Prostate gland (tissue), 2 donors: ENCODE measurements at regions of chr4 and their contacts with region 1.

Region 1: GRCh38 chr4:7067452-7068278 is at the start of gene GRPEL1:
- DNase-seq: peak; percentile 99
- H3K4me3 ChIP-seq: peak within 1 kb of the TSS; percentile 91 to 92
- H3K27ac ChIP-seq: peak within 1 kb of the TSS; percentile 75 to 85
- H3K4me1 ChIP-seq: peaks cover 7% of the 10 kb centered on the region
- H3K27me3 ChIP-seq: no peaks in the 10 kb centered on the region
- CTCF ChIP-seq: peak in 2 of 4 experiments; percentile 1 to 11
- POLR2A ChIP-seq: peak; percentile 95
- total RNA-seq, gene GRPEL1: 12.8 to 25.6 TPM

Region 2: GRCh38 chr4:6716018-6716911 is 351.4 kb before region 1 on chr4 and contains the start of gene BLOC1S4:
- intact Hi-C with region 1: loop called (anchors 5 kb)
- DNase-seq: peak; percentile 80
- H3K4me3 ChIP-seq: peak within 1 kb of the TSS; percentile 78 to 92
- H3K27ac ChIP-seq: peak within 1 kb of the TSS; percentile 91 to 94
- H3K4me1 ChIP-seq: no peaks in the 10 kb centered on the region
- H3K27me3 ChIP-seq: no peaks in the 10 kb centered on the region
- CTCF ChIP-seq: peak in 2 of 4 experiments; percentile 37 to 47
- POLR2A ChIP-seq: peak; percentile 79
- total RNA-seq, gene BLOC1S4: 20.4 to 35.2 TPM

Region 3: DNA sequence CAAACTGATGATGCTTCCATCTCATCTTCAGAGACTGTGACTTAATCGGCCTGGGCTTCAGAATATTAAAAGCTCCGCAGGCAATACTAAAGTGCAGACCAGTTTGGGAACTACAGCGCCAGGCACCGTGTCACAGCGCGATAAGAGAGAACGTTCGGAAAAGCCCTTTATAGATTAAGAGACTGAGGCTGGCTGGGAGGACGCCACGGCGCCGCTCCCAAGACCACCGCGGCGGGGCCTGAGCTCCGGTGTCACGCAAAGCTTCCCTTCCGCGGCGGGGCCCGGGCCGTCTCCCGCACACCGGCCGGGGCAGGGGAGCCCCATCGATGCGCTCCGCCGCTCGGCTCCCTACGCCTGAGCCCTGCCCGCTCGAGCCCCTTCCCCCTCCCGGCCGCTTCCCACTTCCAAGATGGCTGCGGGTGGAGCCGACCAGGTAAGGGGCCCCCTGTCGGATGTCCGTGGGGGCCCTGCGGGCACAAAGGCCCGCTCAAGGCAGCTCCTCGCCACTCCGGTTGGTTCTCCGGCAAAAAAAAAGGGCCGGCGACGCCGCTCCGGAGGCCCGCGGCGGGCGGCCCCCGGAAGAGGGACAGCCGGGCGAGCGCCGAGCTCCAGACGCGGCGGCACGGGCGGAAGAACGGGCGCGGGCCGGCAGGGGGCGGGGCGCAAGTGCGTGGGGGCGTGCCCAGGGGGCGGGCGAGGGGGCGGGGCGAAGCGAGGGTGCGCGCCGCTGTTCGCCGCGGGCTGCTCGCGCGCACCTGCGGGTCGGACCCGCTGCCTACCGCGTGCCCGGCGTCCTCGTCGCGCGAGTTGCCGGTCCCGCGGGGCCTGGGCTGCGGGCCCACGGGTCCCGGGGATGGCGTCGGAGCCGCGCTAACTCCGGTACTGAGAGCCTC is 158.3 kb before region 1 on chr4 and contains the start of gene TBC1D14:
- intact Hi-C with region 1: loop called (anchors 2 kb)
- DNase-seq: peak; percentile 84
- H3K4me3 ChIP-seq: peak within 1 kb of the TSS; percentile 88 to 97
- H3K27ac ChIP-seq: peak within 1 kb of the TSS; percentile 99
- H3K4me1 ChIP-seq: peaks cover 11% of the 10 kb centered on the region
- H3K27me3 ChIP-seq: no peaks in the 10 kb centered on the region
- CTCF ChIP-seq: peak in 2 of 4 experiments; percentile 52 to 64
- POLR2A ChIP-seq: peak; percentile 35
- total RNA-seq, gene TBC1D14: 56.2 to 90.5 TPM

Region 4: GRCh38 chr4:6974138-6974848 is 93.4 kb before region 1 on chr4:
- intact Hi-C with region 1: loop called (anchors 5 kb)
- DNase-seq: peak; percentile 74
- H3K4me3 ChIP-seq: no peak overlapping the region
- H3K27ac ChIP-seq: no peak overlapping the region
- H3K4me1 ChIP-seq: no peaks in the 10 kb centered on the region
- H3K27me3 ChIP-seq: no peaks in the 10 kb centered on the region
- CTCF ChIP-seq: peak; percentile 91 to 96 (median 94)
- POLR2A ChIP-seq: no peak

Region 5: GRCh38 chr4:6986781-6987587 is 80.7 kb before region 1 on chr4:
- intact Hi-C with region 1: loop called (anchors 2 kb)
- DNase-seq: peak; percentile 96
- H3K4me3 ChIP-seq: peak overlapping the region; percentile 54 to 74
- H3K27ac ChIP-seq: peak overlapping the region; percentile 93 to 96
- H3K4me1 ChIP-seq: peaks cover 15% of the 10 kb centered on the region
- H3K27me3 ChIP-seq: no peaks in the 10 kb centered on the region
- CTCF ChIP-seq: peak in 1 of 4 experiments; percentile 28
- POLR2A ChIP-seq: peak; percentile 68

Region 6: DNA sequence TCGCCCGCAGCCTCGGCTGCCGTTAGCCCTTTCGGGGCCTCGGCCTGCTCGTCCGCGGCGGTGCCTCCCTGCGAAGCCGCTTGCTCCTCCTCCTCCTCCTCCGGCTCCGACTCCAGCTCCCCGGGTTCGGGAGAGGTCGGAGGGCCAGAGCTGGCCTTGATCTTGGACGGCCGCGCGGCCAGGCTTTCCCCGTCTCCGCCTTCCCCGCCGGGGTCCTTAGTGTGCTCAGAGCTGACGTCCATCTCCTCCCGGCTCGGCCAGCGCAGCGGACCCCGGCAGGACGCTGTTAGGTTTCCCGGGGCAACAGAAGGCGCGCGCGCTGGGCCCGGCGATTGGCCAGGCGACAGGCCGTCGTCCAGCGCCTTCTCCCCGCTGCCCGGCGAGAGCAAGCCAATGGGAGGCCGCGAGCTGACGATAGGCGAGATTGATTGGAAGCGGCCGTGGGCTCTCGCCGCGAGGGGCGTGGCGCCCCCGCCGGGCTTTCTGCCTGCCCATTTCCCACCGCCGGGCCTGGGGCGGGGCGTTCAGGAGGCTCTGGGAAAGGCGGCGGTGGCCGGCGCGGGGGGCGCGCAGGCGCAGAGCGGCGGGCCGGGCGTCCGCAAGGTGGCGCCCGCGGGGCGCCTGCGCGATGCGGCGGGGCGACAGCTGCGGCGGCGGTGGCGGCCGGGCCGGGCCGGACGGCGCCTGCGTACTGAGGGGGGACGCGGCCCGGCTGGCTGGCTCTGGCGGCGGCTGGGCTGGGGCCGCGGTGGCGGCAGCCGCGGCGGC is 24.8 kb before region 1 on chr4 and contains the start of gene TADA2B:
- intact Hi-C with region 1: loop called (anchors 1 kb)
- DNase-seq: peak; percentile 97
- H3K4me3 ChIP-seq: peak within 1 kb of the TSS; percentile 82 to 95
- H3K27ac ChIP-seq: peak within 1 kb of the TSS; percentile 86 to 91
- H3K4me1 ChIP-seq: peaks cover 28% of the 10 kb centered on the region
- H3K27me3 ChIP-seq: no peaks in the 10 kb centered on the region
- CTCF ChIP-seq: peak; percentile 24 to 90 (median 63)
- POLR2A ChIP-seq: peak; percentile 49
- total RNA-seq, gene TADA2B: 34.5 to 41.2 TPM

Region 7: DNA sequence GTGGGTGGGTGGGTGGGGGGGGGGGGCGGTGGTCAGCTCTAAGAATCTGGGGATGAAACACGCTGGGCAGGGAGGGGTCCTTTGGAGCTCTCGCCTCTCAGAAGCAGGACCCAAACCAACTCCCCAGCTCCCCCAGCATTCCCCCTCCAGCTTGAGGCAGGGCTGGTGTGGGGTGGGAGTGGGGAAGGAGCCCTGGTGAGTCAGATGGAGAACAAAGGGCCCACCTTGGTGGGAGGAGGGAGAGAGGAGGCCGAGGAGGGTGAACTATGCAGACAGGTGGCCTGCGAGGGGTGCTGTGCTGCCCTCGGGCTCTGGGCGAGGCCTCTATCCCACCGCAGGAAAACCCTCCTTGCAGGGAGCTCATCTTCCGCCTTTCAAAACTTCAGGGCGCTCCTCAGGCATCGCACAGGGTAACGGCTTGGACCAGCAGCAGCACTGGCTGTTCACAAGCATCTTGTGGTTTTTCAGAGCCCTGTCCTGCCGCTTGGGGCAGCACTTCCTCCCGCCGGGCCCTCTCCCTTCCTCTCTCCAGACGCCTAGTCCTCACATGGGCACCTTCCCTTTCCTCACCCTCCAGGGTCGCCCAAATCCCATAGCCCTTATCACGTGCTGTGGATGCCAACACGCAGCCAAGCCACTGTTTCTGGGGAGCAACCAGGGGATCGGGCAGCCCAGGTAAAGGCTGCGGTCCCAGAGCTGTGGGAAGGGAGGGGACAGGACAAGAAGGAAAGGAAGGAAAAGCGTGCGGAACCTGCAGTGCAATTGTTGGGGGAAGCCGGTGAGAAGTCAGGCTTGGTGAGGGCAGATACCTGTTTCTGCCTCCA is 34.2 kb after region 1 on chr4:
- intact Hi-C with region 1: loop called (anchors 1 kb)
- DNase-seq: peak; percentile 48
- H3K4me3 ChIP-seq: no peak overlapping the region
- H3K27ac ChIP-seq: peak overlapping the region in 1 of 2 donors; percentile 75
- H3K4me1 ChIP-seq: peaks cover 2% of the 10 kb centered on the region
- H3K27me3 ChIP-seq: no peaks in the 10 kb centered on the region
- CTCF ChIP-seq: peak; percentile 28 to 64 (median 48)
- POLR2A ChIP-seq: no peak

Region 8: GRCh38 chr4:7206911-7207567 is 139.4 kb after region 1 on chr4:
- intact Hi-C with region 1: no loop called
- DNase-seq: peak; percentile 34
- H3K4me3 ChIP-seq: no peak overlapping the region
- H3K27ac ChIP-seq: peak overlapping the region; percentile 3 to 48
- H3K4me1 ChIP-seq: peaks cover 2% of the 10 kb centered on the region
- H3K27me3 ChIP-seq: peaks cover 2% of the 10 kb centered on the region
- CTCF ChIP-seq: no peak
- POLR2A ChIP-seq: no peak

Region 9: DNA sequence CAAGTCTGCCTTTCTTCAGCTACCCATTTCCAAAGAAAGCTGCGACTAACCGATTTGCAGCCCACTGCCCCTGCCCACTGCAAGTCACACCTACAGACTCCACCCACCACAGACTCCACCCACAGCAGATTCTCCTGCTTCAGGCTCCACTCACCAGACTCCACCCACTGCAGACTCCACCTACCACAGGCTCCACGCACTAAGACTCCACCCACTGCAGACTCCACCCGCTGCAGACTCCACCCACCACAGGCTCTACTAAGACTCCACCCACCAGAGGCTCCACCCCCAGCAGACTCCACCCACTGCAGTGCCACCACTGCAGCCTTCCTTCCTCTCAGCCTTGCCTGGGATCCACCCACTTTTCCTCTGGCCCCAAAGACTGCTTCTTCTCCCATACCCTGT is 1049.6 kb after region 1 on chr4:
- intact Hi-C with region 1: no loop called
- DNase-seq: no peak
- H3K4me3 ChIP-seq: no peak overlapping the region
- H3K27ac ChIP-seq: no peak overlapping the region
- H3K4me1 ChIP-seq: no peaks in the 10 kb centered on the region
- H3K27me3 ChIP-seq: no peaks in the 10 kb centered on the region
- CTCF ChIP-seq: no peak
- POLR2A ChIP-seq: no peak